MCF 10A (cell line): ENCODE measurements at regions of chr6 and their contacts with region 1.

Region 1: GRCh38 chr6:26196846-26197648 is 109.8 kb downstream of the HFE start:
- DNase-seq: peak; percentile 94
- H3K4me3 Mint-ChIP-seq: peak overlapping the region; percentile 93
- H3K27ac Mint-ChIP-seq: peak overlapping the region; percentile 96
- H3K4me1 Mint-ChIP-seq: peaks cover 28% of the 10 kb centered on the region
- H3K27me3 Mint-ChIP-seq: no peaks in the 10 kb centered on the region
- CTCF ChIP-seq: no peak

Region 2: GRCh38 chr6:26045065-26045927 is 151.8 kb before region 1 on chr6:
- CTCF ChIA-PET with region 1: no interaction called
- POLR2A ChIA-PET with region 1: interaction called, 158 read pairs
- intact Hi-C with region 1: no loop called
- DNase-seq: peak; percentile 95
- H3K4me3 Mint-ChIP-seq: peak overlapping the region; percentile 80
- H3K27ac Mint-ChIP-seq: peak overlapping the region; percentile 86
- H3K4me1 Mint-ChIP-seq: peaks cover 16% of the 10 kb centered on the region
- H3K27me3 Mint-ChIP-seq: no peaks in the 10 kb centered on the region
- CTCF ChIP-seq: no peak

Region 3: DNA sequence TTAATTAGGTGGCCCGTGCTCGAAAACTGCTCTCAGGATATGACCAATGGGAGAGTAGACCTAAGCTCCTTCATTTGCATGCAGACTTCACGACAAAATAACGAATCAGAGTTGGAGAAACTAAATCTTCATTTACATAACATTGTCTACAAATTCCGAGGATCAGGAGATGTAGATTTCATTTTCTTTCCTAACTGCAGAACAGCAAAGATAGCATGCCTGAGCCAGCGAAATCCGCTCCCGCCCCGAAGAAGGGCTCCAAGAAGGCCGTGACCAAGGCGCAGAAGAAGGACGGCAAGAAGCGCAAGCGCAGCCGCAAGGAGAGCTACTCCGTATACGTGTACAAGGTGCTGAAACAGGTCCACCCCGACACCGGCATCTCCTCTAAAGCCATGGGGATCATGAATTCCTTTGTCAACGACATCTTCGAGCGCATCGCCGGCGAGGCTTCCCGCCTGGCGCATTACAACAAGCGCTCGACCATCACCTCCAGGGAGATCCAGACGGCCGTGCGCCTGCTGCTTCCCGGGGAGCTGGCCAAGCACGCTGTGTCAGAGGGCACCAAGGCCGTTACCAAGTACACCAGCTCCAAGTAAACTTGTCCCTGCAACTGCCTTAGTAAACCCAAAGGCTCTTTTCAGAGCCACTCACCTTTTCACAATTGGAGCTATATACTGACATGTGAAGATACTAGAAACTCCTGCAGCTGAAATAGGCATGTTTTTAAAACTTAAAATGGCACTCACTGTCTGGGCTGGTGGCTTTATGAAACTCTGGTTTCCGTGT is 13.3 kb before region 1 on chr6:
- CTCF ChIA-PET with region 1: interaction called, 6 read pairs
- POLR2A ChIA-PET with region 1: interaction called, 372 read pairs
- intact Hi-C with region 1: no loop called
- DNase-seq: peak; percentile 56
- H3K4me3 Mint-ChIP-seq: peak overlapping the region; percentile 79
- H3K27ac Mint-ChIP-seq: peak overlapping the region; percentile 84
- H3K4me1 Mint-ChIP-seq: peaks cover 27% of the 10 kb centered on the region
- H3K27me3 Mint-ChIP-seq: no peaks in the 10 kb centered on the region
- CTCF ChIP-seq: no peak

Region 4: GRCh38 chr6:26285143-26286134 is 88.4 kb after region 1 on chr6:
- CTCF ChIA-PET with region 1: no interaction called
- POLR2A ChIA-PET with region 1: interaction called, 81 read pairs
- intact Hi-C with region 1: no loop called
- DNase-seq: peak; percentile 100
- H3K4me3 Mint-ChIP-seq: peak overlapping the region; percentile 91
- H3K27ac Mint-ChIP-seq: peak overlapping the region; percentile 92
- H3K4me1 Mint-ChIP-seq: peaks cover 10% of the 10 kb centered on the region
- H3K27me3 Mint-ChIP-seq: no peaks in the 10 kb centered on the region
- CTCF ChIP-seq: no peak

Region 5: DNA sequence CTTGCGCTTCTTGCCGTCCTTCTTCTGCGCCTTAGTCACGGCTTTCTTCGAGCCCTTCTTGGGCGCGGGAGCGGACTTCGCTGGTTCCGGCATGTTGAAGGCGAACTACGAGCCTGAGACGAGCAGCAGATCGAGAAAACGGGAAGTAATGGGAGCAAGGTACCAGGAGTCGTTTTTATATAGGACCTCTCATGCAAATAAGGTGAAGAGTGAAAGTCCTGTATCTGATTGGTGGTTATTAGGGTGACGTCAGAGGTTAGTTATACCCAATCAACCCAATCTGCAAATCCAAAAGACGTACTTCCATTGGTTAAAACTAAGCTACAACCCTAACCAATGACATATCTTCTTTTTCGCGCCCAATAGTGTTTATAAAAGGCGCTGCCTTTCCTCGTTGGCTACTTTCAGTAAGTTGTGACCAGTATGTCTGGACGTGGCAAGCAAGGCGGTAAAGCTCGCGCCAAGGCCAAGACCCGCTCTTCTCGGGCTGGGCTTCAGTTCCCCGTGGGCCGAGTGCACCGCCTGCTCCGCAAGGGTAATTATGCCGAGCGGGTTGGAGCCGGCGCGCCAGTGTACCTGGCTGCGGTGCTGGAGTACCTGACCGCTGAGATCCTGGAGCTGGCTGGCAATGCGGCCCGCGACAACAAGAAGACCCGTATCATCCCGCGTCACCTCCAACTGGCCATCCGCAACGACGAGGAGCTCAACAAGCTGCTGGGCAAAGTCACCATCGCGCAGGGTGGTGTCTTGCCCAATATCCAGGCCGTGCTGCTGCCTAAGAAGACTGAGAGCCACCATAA is 949.9 kb after region 1 on chr6:
- CTCF ChIA-PET with region 1: no interaction called
- POLR2A ChIA-PET with region 1: interaction called, 77 read pairs
- intact Hi-C with region 1: loop called (anchors 5 kb)
- DNase-seq: peak; percentile 99
- H3K4me3 Mint-ChIP-seq: no peak overlapping the region
- H3K27ac Mint-ChIP-seq: no peak overlapping the region
- H3K4me1 Mint-ChIP-seq: no peaks in the 10 kb centered on the region
- H3K27me3 Mint-ChIP-seq: no peaks in the 10 kb centered on the region
- CTCF ChIP-seq: no peak

Region 6: GRCh38 chr6:27864906-27865849 is 1668.1 kb after region 1 on chr6:
- CTCF ChIA-PET with region 1: no interaction called
- POLR2A ChIA-PET with region 1: interaction called, 40 read pairs
- intact Hi-C with region 1: no loop called
- DNase-seq: peak; percentile 96
- H3K4me3 Mint-ChIP-seq: peak overlapping the region; percentile 91
- H3K27ac Mint-ChIP-seq: peak overlapping the region; percentile 97
- H3K4me1 Mint-ChIP-seq: no peaks in the 10 kb centered on the region
- H3K27me3 Mint-ChIP-seq: no peaks in the 10 kb centered on the region
- CTCF ChIP-seq: no peak